Posterior vena cava (tissue), 2 donors: ENCODE measurements at regions of chr22 and their contacts with region 1.

Region 1: GRCh38 chr22:42868751-42869251 is 11.7 kb upstream of the ARFGAP3 start:
- DNase-seq: no peak

Region 2: GRCh38 chr22:42236268-42236667 is 632.5 kb before region 1 on chr22:
- intact Hi-C with region 1: no loop called
- DNase-seq: no peak

Region 3: GRCh38 chr22:43031617-43032016 is 162.8 kb after region 1 on chr22:
- intact Hi-C with region 1: loop called in 1 of 2 experiments (anchors 5 kb)
- DNase-seq: no peak

Region 4: GRCh38 chr22:43118953-43119458 is 250.2 kb after region 1 on chr22:
- intact Hi-C with region 1: no loop called
- DNase-seq: no peak